ENCODE measurements at regions of chr20 and their contacts with region 1.

Region 1: DNA sequence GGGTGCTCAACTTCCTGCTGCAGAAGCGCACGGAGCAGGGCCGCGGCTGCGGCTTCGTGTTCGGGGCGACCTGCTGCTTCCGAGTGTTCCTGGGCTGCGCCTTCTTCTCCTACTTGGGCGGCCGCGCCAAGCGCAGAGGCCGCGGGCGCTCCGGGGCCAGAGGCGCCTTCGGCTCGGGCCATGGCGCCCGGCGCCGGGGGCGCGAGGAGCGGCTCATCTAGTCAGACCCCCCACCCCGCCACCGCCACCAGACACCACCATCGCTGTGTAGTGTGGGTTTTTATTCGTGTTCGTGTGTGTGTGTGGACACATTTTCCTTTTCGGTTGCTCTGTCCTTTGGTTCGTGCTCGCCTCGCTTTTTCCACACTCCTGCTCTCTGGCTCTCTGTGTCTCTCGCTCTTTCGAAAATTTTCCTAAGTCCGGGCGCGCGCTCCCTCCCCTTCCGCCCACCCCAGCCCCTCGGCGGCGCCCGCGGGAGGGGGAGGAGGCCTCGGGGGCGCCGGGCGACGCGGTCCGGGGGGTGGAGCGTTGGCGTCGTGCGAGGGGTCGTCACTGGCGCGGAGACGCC is 38.1 kb downstream of the GNAS start:
- DNase-seq: no peak
- ATAC-seq: peak; percentile 50
- H3K4me3 ChIP-seq: peak overlapping the region; percentile 76
- H3K27ac ChIP-seq: peak overlapping the region; percentile 87
- H3K4me1 ChIP-seq: peaks cover 30% of the 10 kb centered on the region
- H3K27me3 ChIP-seq: no peaks in the 10 kb centered on the region
- CTCF ChIP-seq: no peak
- EP300 ChIP-seq: no peak
- POLR2A ChIP-seq: peak; percentile 72
- RAD21 ChIP-seq: no peak

Region 2: GRCh38 chr20:58349586-58349985 is 541.0 kb before region 1 on chr20:
- CTCF ChIA-PET with region 1: no interaction called
- POLR2A ChIA-PET with region 1: no interaction called
- RAD21 ChIA-PET with region 1: no interaction called
- SMC1A ChIA-PET with region 1: no interaction called
- in situ Hi-C with region 1: no loop called
- intact Hi-C with region 1: no loop called
- DNase-seq: no peak
- ATAC-seq: peak; percentile 38; the same call in 1 of the 3 replicates
- H3K4me3 ChIP-seq: no peak overlapping the region
- H3K27ac ChIP-seq: no peak overlapping the region
- H3K4me1 ChIP-seq: no peaks in the 10 kb centered on the region
- H3K27me3 ChIP-seq: no peaks in the 10 kb centered on the region
- CTCF ChIP-seq: no peak
- EP300 ChIP-seq: no peak
- POLR2A ChIP-seq: no peak
- RAD21 ChIP-seq: no peak

Region 3: DNA sequence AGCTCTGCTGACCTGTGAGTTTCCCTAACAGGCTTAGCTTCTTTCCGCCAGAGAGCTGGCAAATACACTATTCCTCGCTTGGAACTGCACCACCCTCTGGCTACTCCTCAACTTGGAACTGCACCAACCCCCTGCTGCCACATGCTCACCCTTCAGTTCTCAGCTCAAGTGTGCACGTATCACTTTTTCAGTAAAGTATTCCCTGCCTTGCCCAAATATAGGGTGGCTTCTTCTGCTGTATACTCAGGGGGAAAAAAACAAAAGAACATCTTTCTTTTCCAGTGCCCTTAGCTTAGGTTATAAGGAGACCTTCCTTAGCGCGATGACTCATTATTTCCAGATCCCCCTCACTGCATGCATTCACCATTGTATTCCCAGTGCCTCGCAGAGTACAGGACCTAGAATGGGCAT is 61.1 kb before region 1 on chr20:
- CTCF ChIA-PET with region 1: no interaction called
- POLR2A ChIA-PET with region 1: no interaction called
- RAD21 ChIA-PET with region 1: no interaction called
- SMC1A ChIA-PET with region 1: no interaction called
- in situ Hi-C with region 1: no loop called
- intact Hi-C with region 1: no loop called
- DNase-seq: no peak
- ATAC-seq: no peak
- H3K4me3 ChIP-seq: no peak overlapping the region
- H3K27ac ChIP-seq: no peak overlapping the region
- H3K4me1 ChIP-seq: no peaks in the 10 kb centered on the region
- H3K27me3 ChIP-seq: no peaks in the 10 kb centered on the region
- CTCF ChIP-seq: no peak
- EP300 ChIP-seq: no peak
- POLR2A ChIP-seq: no peak
- RAD21 ChIP-seq: no peak

Region 4: DNA sequence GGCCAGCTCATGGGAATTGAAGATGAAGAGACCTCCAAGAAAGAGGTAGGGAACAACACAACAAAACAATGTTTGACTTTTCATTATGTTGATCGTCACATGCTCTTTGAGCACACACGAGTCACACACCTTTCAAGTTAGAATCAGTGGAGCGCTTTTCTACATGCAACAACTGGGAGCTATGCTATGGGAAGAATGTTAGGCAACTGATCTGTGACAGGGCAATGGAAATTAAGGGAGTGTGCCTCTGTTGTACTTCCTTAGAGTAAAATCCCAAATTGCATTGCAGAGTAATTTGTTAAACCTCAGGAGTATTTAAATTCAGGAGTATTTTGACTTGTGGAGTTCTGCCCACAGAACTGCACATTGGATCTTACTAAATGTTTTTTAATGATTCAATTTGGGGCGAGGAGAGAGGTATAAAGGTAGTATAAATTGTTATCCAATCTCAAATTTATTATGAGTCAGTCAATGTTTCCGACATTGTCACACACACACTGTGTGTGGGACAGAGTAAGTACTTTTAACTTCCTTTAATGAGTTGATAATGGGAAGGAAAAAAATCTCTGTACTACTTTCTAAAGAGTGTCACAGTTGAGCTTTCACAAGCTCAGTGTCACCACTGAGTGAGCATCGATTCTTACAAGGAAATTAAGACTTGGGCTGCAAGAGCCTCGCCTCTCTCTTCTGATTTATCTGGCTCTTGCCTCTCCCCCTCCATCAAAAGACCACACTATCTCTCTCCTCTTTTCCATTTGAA is 27.4 kb before region 1 on chr20:
- CTCF ChIA-PET with region 1: no interaction called
- POLR2A ChIA-PET with region 1: no interaction called
- RAD21 ChIA-PET with region 1: no interaction called
- SMC1A ChIA-PET with region 1: no interaction called
- in situ Hi-C with region 1: no loop called
- intact Hi-C with region 1: no loop called
- DNase-seq: no peak
- ATAC-seq: no peak
- H3K4me3 ChIP-seq: no peak overlapping the region
- H3K27ac ChIP-seq: no peak overlapping the region
- H3K4me1 ChIP-seq: no peaks in the 10 kb centered on the region
- H3K27me3 ChIP-seq: no peaks in the 10 kb centered on the region
- CTCF ChIP-seq: no peak
- EP300 ChIP-seq: no peak
- POLR2A ChIP-seq: no peak
- RAD21 ChIP-seq: no peak

Region 5: DNA sequence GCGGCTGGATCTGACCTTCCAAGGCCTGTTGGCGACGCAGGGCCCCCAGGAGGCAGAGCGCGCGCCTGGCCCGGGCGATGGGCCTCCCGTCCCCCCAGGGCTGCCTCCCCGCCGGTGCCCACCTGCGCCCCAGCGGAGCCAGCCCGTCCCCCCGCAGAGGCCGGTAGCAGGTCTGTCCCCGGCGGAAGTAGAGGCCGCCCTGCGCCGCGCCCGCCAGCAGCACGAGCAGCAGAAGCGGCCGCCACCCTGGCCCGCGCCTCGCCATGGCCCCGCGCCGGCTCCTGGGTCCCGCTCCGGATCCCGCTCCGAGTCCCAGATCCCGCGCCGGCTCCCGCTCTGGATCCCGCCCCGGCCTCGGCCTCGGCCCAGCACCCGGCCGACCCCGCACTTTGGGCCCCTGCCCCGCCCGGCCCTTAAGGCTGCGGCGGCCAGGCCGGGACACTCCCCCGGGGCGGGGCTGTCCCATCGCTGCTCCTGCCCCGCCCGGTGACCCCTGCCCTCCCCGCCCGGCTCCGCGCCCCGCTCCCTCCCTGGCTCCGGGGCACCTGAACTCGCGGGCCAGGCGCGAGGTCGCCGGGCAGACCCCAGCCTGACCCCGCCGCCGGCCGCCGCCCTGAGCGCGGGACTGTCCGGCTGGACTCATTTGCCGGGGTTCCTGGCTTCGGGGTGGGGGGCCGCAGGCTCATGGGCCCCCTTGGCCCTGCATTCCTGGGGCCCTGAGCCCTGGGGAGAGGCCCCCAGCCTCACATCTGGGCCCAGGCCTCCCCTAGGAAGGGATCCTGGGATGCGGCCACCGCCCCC is 116.5 kb after region 1 on chr20 and contains the start of gene CTSZ:
- CTCF ChIA-PET with region 1: no interaction called
- POLR2A ChIA-PET with region 1: no interaction called
- RAD21 ChIA-PET with region 1: interaction called, 3 read pairs
- SMC1A ChIA-PET with region 1: interaction called, 6 read pairs
- in situ Hi-C with region 1: no loop called
- intact Hi-C with region 1: loop called (anchors 2 kb)
- DNase-seq: no peak
- ATAC-seq: peak; percentile 52
- H3K4me3 ChIP-seq: peak within 1 kb of the TSS; percentile 92
- H3K27ac ChIP-seq: peak within 1 kb of the TSS; percentile 95
- H3K4me1 ChIP-seq: peaks cover 35% of the 10 kb centered on the region
- H3K27me3 ChIP-seq: no peaks in the 10 kb centered on the region
- CTCF ChIP-seq: no peak
- EP300 ChIP-seq: no peak
- POLR2A ChIP-seq: peak; percentile 70
- RAD21 ChIP-seq: no peak
- polyA plus RNA-seq, gene CTSZ: 6.0 to 14.0 TPM